Endothelial cell of umbilical vein (primary cell): ENCODE measurements at regions of chr6 and their contacts with region 1.

Region 1: DNA sequence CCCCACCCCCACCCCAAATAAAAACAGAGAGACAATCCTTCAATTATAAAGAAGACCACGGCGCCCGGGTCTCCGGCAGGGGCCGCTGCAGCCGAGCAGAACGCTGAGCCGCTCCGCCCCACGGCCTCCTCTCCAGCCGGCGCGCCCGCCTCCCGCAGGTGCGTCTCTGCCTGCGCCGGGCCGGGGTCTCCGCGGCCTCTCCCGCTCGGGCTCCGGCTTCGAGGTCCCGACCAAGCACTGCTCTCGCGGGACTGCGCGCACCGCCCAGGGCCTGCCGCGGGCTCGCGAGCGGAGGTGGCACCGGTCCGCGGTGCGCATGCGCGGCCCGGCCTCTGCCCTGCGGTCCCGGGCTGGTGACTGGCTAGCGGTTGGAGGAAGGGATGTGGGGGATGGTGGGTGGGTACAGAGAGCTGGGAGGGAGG is 241 bp upstream of the SIRT5 start:
- DNase-seq: peak; percentile 96
- H3K4me3 ChIP-seq: peak overlapping the region; percentile 54 to 88 (median 75)
- H3K27ac ChIP-seq: peak overlapping the region; percentile 80
- H3K4me1 ChIP-seq: peaks cover 8% of the 10 kb centered on the region
- H3K27me3 ChIP-seq: no peaks in the 10 kb centered on the region
- CTCF ChIP-seq: peak in 1 of 2 donors; percentile 40
- POLR2A ChIP-seq: peak; percentile 72

Region 2: GRCh38 chr6:13328076-13328874 is 245.9 kb before region 1 on chr6 and contains the start of gene TBC1D7:
- CTCF ChIA-PET with region 1: interaction called, 36 read pairs
- POLR2A ChIA-PET with region 1: interaction called, 5 read pairs
- dilution Hi-C with region 1: loop called (anchors 25 kb)
- intact Hi-C with region 1: no loop called
- DNase-seq: peak; percentile 94
- H3K4me3 ChIP-seq: peak within 1 kb of the TSS; percentile 76 to 92 (median 87)
- H3K27ac ChIP-seq: peak within 1 kb of the TSS; percentile 92
- H3K4me1 ChIP-seq: peaks cover 16% of the 10 kb centered on the region
- H3K27me3 ChIP-seq: no peaks in the 10 kb centered on the region
- CTCF ChIP-seq: no peak
- POLR2A ChIP-seq: peak; percentile 94
- total RNA-seq, gene TBC1D7: 26.6 and 28.1 TPM in 2 replicates

Region 3: GRCh38 chr6:13395272-13396237 is 178.6 kb before region 1 on chr6:
- CTCF ChIA-PET with region 1: interaction called, 9 read pairs
- POLR2A ChIA-PET with region 1: no interaction called
- dilution Hi-C with region 1: no loop called
- intact Hi-C with region 1: loop called (anchors 1 kb)
- DNase-seq: peak; percentile 100
- H3K4me3 ChIP-seq: no peak overlapping the region
- H3K27ac ChIP-seq: peak overlapping the region; percentile 92
- H3K4me1 ChIP-seq: peaks cover 19% of the 10 kb centered on the region
- H3K27me3 ChIP-seq: no peaks in the 10 kb centered on the region
- CTCF ChIP-seq: no peak
- POLR2A ChIP-seq: peak; percentile 65

Region 4: GRCh38 chr6:13526727-13527670 is 47.2 kb before region 1 on chr6:
- CTCF ChIA-PET with region 1: interaction called, 7 read pairs
- POLR2A ChIA-PET with region 1: no interaction called
- dilution Hi-C with region 1: no loop called
- intact Hi-C with region 1: loop called (anchors 1 kb)
- DNase-seq: peak; percentile 94
- H3K4me3 ChIP-seq: no peak overlapping the region
- H3K27ac ChIP-seq: peak overlapping the region; percentile 65
- H3K4me1 ChIP-seq: peaks cover 37% of the 10 kb centered on the region
- H3K27me3 ChIP-seq: no peaks in the 10 kb centered on the region
- CTCF ChIP-seq: no peak
- POLR2A ChIP-seq: peak; percentile 63

Region 5: GRCh38 chr6:13586603-13587542 is 12.7 kb after region 1 on chr6:
- CTCF ChIA-PET with region 1: interaction called, 29 read pairs
- POLR2A ChIA-PET with region 1: no interaction called
- dilution Hi-C with region 1: no loop called
- intact Hi-C with region 1: loop called (anchors 1 kb)
- DNase-seq: no peak
- H3K4me3 ChIP-seq: no peak overlapping the region
- H3K27ac ChIP-seq: no peak overlapping the region
- H3K4me1 ChIP-seq: no peaks in the 10 kb centered on the region
- H3K27me3 ChIP-seq: no peaks in the 10 kb centered on the region
- CTCF ChIP-seq: no peak
- POLR2A ChIP-seq: no peak

Region 6: GRCh38 chr6:13795041-13795750 is 221.0 kb after region 1 on chr6:
- CTCF ChIA-PET with region 1: no interaction called
- POLR2A ChIA-PET with region 1: no interaction called
- dilution Hi-C with region 1: no loop called
- intact Hi-C with region 1: loop called (anchors 10 kb)
- DNase-seq: peak; percentile 75
- H3K4me3 ChIP-seq: no peak overlapping the region
- H3K27ac ChIP-seq: peak overlapping the region; percentile 38
- H3K4me1 ChIP-seq: peaks cover 10% of the 10 kb centered on the region
- H3K27me3 ChIP-seq: no peaks in the 10 kb centered on the region
- CTCF ChIP-seq: peak; percentile 89 to 96
- POLR2A ChIP-seq: no peak

Region 7: GRCh38 chr6:14910692-14911547 is 1336.8 kb after region 1 on chr6:
- CTCF ChIA-PET with region 1: no interaction called
- POLR2A ChIA-PET with region 1: no interaction called
- dilution Hi-C with region 1: no loop called
- intact Hi-C with region 1: no loop called
- DNase-seq: no peak
- H3K4me3 ChIP-seq: no peak overlapping the region
- H3K27ac ChIP-seq: no peak overlapping the region
- H3K4me1 ChIP-seq: no peaks in the 10 kb centered on the region
- H3K27me3 ChIP-seq: no peaks in the 10 kb centered on the region
- CTCF ChIP-seq: no peak
- POLR2A ChIP-seq: no peak